ENCODE measurements at regions of chr1 and their contacts with region 1.

Region 1: GRCh38 chr1:146036965-146037646 is 15.6 kb upstream of the HJV start:
- DNase-seq: peak; percentile 89
- H3K4me3 Mint-ChIP-seq: peak overlapping the region; percentile 99
- H3K27ac Mint-ChIP-seq: peak overlapping the region; percentile 99
- H3K4me1 Mint-ChIP-seq: peaks cover 37% of the 10 kb centered on the region
- H3K27me3 Mint-ChIP-seq: peaks cover 9% of the 10 kb centered on the region

Region 2: DNA sequence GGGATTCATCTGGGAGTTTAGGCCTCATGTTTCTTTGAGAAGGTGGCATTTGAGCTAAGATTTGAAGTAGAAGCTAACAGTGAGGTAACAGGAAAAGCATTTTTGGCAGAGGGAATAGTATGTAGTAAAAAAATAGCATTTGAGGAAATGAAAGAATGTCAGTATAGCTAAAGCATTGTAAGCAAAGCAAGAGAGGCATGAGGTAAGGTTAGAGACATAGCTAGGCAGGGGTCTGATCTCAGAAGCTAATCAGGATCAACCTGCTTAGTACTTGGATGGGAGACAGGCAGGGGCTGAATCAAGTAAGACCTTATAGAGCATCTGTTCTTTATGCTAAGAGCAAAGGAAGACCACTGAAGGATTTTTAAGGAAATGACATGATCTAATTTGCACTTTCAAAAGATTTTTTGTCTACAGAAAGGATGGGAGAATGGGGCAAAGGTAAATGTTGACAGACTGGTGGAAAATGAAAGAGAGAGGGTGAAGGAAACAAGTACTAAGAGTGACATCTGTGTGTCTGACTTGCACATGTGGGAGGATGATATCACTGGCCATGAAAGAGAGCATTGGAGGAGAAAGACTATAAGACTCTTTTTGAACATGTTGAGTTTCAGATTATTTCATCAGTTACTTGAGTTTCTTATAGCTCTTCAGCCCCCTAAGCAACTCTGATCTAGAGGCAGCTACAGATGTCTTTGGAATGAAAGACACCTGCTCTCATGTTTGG is 209.0 kb before region 1 on chr1:
- CTCF ChIA-PET with region 1: no interaction called
- intact Hi-C with region 1: no loop called
- DNase-seq: peak; percentile 56
- H3K4me3 Mint-ChIP-seq: peak overlapping the region; percentile 7
- H3K27ac Mint-ChIP-seq: peak overlapping the region; percentile 95
- H3K4me1 Mint-ChIP-seq: peaks cover 44% of the 10 kb centered on the region
- H3K27me3 Mint-ChIP-seq: no peaks in the 10 kb centered on the region

Region 3: GRCh38 chr1:146020058-146021049 is 16.8 kb before region 1 on chr1:
- CTCF ChIA-PET with region 1: interaction called, 19 read pairs
- intact Hi-C with region 1: no loop called
- DNase-seq: no peak
- H3K4me3 Mint-ChIP-seq: no peak overlapping the region
- H3K27ac Mint-ChIP-seq: no peak overlapping the region
- H3K4me1 Mint-ChIP-seq: peaks cover 8% of the 10 kb centered on the region
- H3K27me3 Mint-ChIP-seq: peaks cover 34% of the 10 kb centered on the region

Region 4: DNA sequence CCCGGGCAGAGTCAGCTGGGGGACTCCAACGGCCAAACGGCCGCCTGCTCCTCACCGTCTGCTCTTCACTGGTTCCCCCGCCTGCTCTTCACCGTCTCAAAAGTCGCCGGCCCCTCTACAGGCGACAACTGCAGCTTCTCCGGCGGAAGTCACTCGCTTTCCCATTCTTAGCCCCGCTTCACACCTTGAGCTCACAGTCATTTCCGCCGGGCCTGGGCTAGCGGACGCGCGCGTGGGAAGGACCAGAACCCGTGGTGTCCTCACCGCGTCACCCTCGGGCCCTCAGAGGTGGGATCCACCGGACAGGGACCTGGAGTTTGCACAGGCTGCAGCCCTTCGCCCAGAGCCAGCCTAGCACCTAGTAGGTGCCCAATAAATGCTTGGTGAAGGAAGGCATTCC is 12.3 kb after region 1 on chr1:
- CTCF ChIA-PET with region 1: interaction called, 4 read pairs
- intact Hi-C with region 1: loop called (anchors 1 kb)
- DNase-seq: no peak
- H3K4me3 Mint-ChIP-seq: no peak overlapping the region
- H3K27ac Mint-ChIP-seq: no peak overlapping the region
- H3K4me1 Mint-ChIP-seq: peaks cover 27% of the 10 kb centered on the region
- H3K27me3 Mint-ChIP-seq: no peaks in the 10 kb centered on the region